Gastrocnemius medialis (tissue), 4 donors: ENCODE measurements at regions of chr7 and their contacts with region 1.

Region 1: GRCh38 chr7:106176414-106177299 is 64.5 kb upstream of the SYPL1 start:
- DNase-seq: peak; percentile 63 to 75
- ATAC-seq: peak; percentile 68 to 82
- H3K4me3 ChIP-seq: no peak overlapping the region
- H3K27ac ChIP-seq: peak overlapping the region; percentile 69 to 73 (median 71)
- H3K4me1 ChIP-seq: peaks cover 18% of the 10 kb centered on the region in 2 donors
- H3K27me3 ChIP-seq: no peaks in the 10 kb centered on the region
- CTCF ChIP-seq: peak; percentile 90 to 98 (median 97)
- POLR2A ChIP-seq: no peak

Region 2: GRCh38 chr7:105916603-105917002 is 260.1 kb before region 1 on chr7:
- in situ Hi-C with region 1: no loop called
- intact Hi-C with region 1: no loop called
- DNase-seq: no peak
- ATAC-seq: no peak
- H3K4me3 ChIP-seq: no peak overlapping the region
- H3K27ac ChIP-seq: no peak overlapping the region
- H3K4me1 ChIP-seq: no peaks in the 10 kb centered on the region
- H3K27me3 ChIP-seq: no peaks in the 10 kb centered on the region
- CTCF ChIP-seq: no peak
- POLR2A ChIP-seq: no peak

Region 3: GRCh38 chr7:106216517-106216922 is 39.9 kb after region 1 on chr7:
- in situ Hi-C with region 1: no loop called
- intact Hi-C with region 1: loop called (anchors 2 kb)
- DNase-seq: peak; percentile 68 to 71
- ATAC-seq: peak; percentile 96
- H3K4me3 ChIP-seq: peak overlapping the region in 3 of 4 donors; percentile 19 to 40 (median 33)
- H3K27ac ChIP-seq: peak overlapping the region; percentile 73 to 91 (median 80)
- H3K4me1 ChIP-seq: peaks cover 16 to 27% of the 10 kb centered on the region in 2 donors
- H3K27me3 ChIP-seq: no peaks in the 10 kb centered on the region
- CTCF ChIP-seq: no peak
- POLR2A ChIP-seq: no peak

Region 4: DNA sequence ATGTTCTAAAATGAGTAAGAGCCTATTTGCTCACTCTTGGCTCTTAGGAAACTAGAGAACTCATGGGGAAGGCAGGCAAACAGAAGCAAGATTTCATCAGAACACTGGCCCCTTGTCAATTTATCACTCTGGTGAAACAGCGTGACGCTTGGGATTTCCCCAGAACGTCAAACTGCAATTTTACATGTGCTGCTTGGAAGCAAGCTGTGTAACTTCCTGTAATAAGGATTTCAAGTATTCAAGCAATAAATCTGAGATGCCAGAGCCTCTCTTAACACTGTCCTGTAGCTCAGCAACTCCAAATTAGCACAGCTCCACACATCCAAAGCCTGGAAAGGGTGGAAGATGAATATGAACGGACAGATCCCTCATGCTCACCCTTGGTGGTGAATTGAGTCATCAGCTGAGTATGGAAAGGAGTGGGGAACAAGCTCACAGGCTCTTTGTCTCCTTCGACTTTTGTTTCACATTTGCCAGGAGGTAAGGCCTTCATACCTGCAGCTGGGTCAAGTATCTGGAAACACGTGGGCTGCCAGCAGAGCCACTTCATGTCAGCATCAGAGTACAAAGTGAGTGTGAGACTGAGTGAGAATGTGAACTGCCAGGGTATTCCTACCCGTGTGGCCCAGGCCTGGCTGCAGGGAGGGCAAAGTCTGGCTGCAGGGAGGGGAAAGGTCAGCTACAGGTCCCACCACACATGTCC is 248.5 kb after region 1 on chr7:
- in situ Hi-C with region 1: no loop called
- intact Hi-C with region 1: loop called (anchors 5 kb)
- DNase-seq: peak; percentile 72 to 80
- ATAC-seq: peak; percentile 93 to 96
- H3K4me3 ChIP-seq: peak overlapping the region in 1 of 4 donors; percentile 1
- H3K27ac ChIP-seq: peak overlapping the region; percentile 65 to 83 (median 77)
- H3K4me1 ChIP-seq: peaks cover 31 to 32% of the 10 kb centered on the region in 2 donors
- H3K27me3 ChIP-seq: no peaks in the 10 kb centered on the region
- CTCF ChIP-seq: no peak
- POLR2A ChIP-seq: no peak

Region 5: GRCh38 chr7:106461993-106462859 is 285.6 kb after region 1 on chr7:
- in situ Hi-C with region 1: loop called (anchors 5 kb)
- intact Hi-C with region 1: loop called (anchors 1 kb)
- DNase-seq: no peak
- ATAC-seq: peak; percentile 36 to 53
- H3K4me3 ChIP-seq: no peak overlapping the region
- H3K27ac ChIP-seq: no peak overlapping the region
- H3K4me1 ChIP-seq: peaks cover 0 to 6% of the 10 kb centered on the region in 2 donors
- H3K27me3 ChIP-seq: no peaks in the 10 kb centered on the region
- CTCF ChIP-seq: peak; percentile 40 to 73 (median 65)
- POLR2A ChIP-seq: no peak

Region 6: DNA sequence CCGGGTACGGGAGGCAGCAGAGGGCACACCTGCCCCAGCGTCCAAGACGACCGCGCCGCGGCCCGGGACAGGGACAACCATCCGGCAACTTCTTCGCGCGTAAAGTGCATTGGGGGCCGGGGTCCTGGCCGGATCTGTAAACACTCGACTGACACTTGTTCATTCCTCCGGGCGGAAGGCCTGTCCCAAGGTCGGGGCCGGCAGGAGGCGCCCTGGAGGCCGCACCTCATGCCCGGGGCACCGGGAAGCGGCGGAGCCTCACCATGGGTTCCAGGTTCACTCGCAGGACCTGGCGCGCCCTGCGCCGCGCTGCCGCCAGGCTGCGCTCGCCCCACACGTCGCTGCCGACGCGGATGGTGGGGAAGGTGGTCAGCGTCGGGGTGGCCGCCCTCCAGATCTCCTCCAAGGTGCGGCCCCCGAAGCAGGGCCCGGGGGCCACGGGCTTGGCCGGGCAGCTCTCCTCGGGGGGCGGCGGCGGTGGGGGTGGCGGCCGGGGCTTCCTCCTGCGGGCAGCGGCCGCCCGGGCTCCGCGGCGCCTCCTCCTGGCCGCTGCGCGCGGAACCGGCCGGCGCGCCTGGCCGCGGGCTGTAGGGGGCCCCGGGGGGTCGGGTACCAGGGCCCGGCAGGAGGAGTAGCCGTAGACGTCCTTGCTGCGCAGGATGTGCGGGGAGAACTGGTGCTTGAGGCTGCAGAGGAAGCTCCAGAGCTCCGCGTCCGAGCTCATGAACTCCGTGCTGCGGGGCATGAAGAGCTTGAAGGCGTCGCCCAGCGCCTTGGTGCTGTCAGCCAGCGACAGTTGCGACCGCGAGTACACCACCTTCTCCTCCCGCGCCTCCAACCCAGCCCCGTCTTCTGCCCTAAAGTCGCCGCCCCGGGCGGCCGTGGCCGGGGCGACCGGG is 483.6 kb after region 1 on chr7:
- in situ Hi-C with region 1: loop called in 1 of 4 experiments (anchors 25 kb)
- intact Hi-C with region 1: loop called (anchors 5 kb)
- DNase-seq: peak; percentile 23 to 59
- ATAC-seq: peak; percentile 57 to 66
- H3K4me3 ChIP-seq: peak overlapping the region; percentile 60 to 89 (median 78)
- H3K27ac ChIP-seq: peak overlapping the region; percentile 82 to 91 (median 88)
- H3K4me1 ChIP-seq: peaks cover 8 to 12% of the 10 kb centered on the region in 2 donors
- H3K27me3 ChIP-seq: no peaks in the 10 kb centered on the region
- CTCF ChIP-seq: peak; percentile 49 to 76 (median 67)
- POLR2A ChIP-seq: peak in 1 of 2 donors; percentile 9

Region 7: DNA sequence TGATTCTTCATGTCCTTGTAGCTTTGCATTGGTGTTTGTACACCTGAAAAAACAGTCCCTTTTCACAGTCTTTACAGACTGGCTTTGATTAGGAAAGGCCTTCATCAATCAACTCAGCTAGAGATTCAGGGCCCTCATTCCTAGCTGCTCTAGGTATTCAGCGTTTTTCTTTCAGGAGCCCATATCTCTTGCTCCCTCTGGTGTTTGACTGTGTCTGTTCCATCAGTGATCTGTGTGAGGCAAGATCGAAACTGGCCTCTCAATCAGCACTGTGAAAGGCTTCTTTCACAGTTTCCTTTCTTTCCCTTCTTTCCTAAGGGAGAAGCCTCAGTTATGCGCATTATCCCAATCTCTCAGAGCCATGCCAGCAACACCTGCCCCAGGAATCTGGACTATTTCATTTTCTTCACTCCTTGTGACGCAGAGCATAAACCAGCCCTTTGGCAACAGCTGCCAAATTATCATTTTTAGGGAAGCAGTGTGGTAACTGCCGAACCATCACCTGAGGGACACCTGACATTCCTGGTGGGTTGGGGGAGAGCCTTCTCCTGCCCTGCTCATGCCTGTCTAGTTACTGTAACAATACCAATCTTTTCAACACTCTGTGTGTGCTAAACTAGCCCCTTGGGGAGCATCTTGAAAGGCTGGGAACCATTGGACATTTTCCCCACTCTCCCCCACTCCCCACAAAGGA is 560.0 kb after region 1 on chr7:
- in situ Hi-C with region 1: no loop called
- intact Hi-C with region 1: loop called (anchors 5 kb)
- DNase-seq: no peak
- ATAC-seq: peak; percentile 39 to 70
- H3K4me3 ChIP-seq: no peak overlapping the region
- H3K27ac ChIP-seq: no peak overlapping the region
- H3K4me1 ChIP-seq: no peaks in the 10 kb centered on the region
- H3K27me3 ChIP-seq: no peaks in the 10 kb centered on the region
- CTCF ChIP-seq: peak in 3 of 5 experiments; percentile 37 to 50 (median 45)
- POLR2A ChIP-seq: no peak

Region 8: DNA sequence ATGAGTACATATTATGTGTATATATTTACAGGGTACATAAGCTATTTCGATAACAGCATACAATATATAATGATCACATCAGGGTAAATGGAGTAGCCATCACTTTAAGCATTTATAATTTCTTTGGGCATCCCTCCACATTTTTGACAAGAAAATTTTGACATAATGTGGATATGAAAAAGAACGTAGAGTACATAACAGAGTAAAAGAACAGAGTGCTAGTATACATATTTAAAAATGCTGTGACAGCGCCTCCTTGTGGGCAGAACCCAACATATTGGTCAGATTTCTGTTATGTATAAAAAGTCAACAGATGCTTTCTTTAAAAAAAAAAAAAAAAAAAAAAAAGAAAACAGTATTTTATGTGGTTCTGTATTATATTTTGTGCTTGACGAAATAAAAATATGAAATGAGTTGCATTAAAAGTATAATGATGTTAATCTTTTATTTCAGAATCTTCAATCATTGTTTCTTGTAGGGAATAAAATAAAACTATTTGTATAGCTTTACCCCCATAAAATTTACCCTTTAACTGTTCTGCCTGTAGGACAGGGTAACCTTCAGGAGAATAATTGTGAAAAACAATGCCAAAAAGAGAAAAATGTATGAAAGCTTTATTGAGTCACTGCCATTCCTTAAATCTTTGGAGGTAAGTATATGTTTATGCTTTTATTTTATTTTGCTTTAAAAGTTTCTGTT is 973.9 kb after region 1 on chr7:
- in situ Hi-C with region 1: no loop called
- intact Hi-C with region 1: loop called (anchors 5 kb)
- DNase-seq: peak; percentile 7 to 46
- ATAC-seq: peak; percentile 58 to 64
- H3K4me3 ChIP-seq: no peak overlapping the region
- H3K27ac ChIP-seq: no peak overlapping the region
- H3K4me1 ChIP-seq: peaks cover 3 to 6% of the 10 kb centered on the region in 2 donors
- H3K27me3 ChIP-seq: no peaks in the 10 kb centered on the region
- CTCF ChIP-seq: peak; percentile 34 to 66 (median 50)
- POLR2A ChIP-seq: no peak